ENCODE measurements at regions of chr6 and their contacts with region 1.

Region 1: DNA sequence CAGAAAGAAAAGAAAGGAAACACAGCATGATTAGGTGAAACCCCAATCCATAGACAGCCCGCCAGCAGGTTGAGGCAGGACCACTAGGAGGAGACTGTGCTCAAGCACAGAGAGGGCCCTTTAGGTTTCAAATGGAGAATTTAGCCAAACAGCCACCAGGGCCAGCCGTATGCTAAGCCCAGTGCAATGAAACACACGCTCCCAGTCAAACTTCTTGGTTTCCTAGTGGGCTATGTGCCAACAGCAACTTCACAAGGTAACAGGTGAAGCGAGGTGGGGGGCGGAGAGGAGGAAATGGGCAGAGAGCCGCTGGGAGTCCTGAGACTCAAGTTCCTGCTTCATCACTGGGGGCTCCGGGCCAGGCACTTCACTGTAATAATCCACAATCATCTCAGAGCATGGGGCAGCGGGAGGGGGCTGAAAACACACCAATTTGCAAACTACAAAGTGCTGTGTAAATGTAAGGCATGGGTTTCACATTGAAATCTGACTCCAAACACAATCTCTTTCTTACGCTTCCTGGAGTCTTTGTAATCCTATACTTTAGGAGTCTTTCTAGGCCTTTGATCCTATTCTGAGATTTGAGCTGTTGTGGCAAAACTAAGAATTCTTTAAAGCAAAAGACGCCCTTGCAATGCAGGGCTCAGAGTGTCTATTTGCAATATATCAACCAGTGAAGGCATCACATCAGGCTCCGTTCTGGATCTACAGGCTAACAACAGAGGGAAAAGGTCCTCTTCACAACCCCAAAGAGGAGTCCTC is 117.3 kb downstream of the OPRM1 start:
- DNase-seq: peak; percentile 68
- H3K4me3 ChIP-seq: no peak overlapping the region
- H3K27ac ChIP-seq: no peak overlapping the region
- H3K4me1 ChIP-seq: peaks cover 3 to 10% (median 9%) of the 10 kb centered on the region in 4 donors
- H3K27me3 ChIP-seq: no peaks in the 10 kb centered on the region
- CTCF ChIP-seq: peak in 2 of 3 experiments; percentile 24 to 46
- EP300 ChIP-seq: no peak
- POLR2A ChIP-seq: no peak

Region 2: DNA sequence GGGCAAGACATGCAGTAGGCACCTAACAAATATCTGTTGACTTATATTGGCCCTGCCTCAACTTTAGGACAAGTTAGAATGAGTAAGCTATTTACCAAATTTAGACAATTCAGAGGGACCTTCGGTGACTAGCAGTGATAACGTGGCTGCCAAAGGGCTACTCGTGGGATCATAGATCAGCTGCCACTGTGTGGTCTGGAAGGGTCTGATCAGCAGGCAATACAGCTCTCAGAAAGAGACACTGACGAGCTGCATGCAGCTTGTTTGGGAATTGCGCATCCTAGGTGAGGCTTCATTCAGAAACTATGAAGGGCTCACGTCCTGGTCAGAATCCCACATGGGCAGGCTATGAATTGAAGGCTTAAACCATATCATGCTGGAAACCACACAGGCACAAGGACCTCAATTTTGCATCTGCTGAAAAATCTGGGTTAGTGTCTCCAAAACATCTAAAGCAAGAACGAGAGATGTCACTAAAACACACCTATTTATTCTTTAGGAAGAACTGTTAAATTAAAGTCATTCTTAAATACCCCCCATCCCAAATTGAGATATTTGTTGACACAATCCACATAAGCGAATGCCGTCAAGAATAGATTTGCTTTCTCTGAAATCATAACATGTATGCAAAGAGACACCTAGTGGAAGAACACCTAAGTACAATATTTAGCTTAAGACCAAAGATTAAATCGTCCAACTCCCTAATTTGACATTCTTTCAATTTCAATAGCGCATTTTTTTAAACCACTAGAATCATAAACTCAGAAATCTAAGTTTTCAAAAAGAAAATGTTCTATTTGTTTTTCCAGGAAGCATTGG is 120.7 kb after region 1 on chr6:
- intact Hi-C with region 1: loop called (anchors 2 kb)
- DNase-seq: no peak
- H3K4me3 ChIP-seq: no peak overlapping the region
- H3K27ac ChIP-seq: no peak overlapping the region
- H3K4me1 ChIP-seq: peaks cover 5 to 15% (median 8%) of the 10 kb centered on the region in 4 donors
- H3K27me3 ChIP-seq: no peaks in the 10 kb centered on the region
- CTCF ChIP-seq: peak; percentile 58 to 61 (median 59)
- EP300 ChIP-seq: no peak
- POLR2A ChIP-seq: no peak

Region 3: GRCh38 chr6:154301839-154302752 is 145.8 kb after region 1 on chr6:
- intact Hi-C with region 1: no loop called
- DNase-seq: no peak
- H3K4me3 ChIP-seq: no peak overlapping the region
- H3K27ac ChIP-seq: no peak overlapping the region
- H3K4me1 ChIP-seq: peaks cover 9 to 14% (median 11%) of the 10 kb centered on the region in 4 donors
- H3K27me3 ChIP-seq: no peaks in the 10 kb centered on the region
- CTCF ChIP-seq: no peak
- EP300 ChIP-seq: no peak
- POLR2A ChIP-seq: no peak

Region 4: DNA sequence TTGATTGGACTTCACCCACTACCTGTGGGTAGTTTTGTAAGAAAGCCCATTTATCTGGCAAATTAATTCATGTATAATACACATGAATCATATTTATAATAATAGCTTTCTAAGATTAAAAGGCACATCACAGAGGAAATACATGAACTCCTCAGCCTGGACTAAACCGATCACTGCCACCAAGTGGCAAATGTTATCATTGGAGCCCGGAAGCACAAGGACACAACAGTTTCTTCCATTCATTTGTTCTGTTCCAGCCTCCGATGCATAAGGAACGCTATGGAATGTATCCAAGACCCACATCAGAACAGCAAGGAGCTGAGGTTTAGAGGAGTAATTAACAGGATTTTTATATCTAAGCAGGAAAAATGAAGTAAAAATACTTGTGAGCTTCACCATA is 214.2 kb after region 1 on chr6:
- intact Hi-C with region 1: loop called (anchors 10 kb)
- DNase-seq: no peak
- H3K4me3 ChIP-seq: no peak overlapping the region
- H3K27ac ChIP-seq: no peak overlapping the region
- H3K4me1 ChIP-seq: peaks cover 0 to 6% (median 3%) of the 10 kb centered on the region in 4 donors
- H3K27me3 ChIP-seq: no peaks in the 10 kb centered on the region
- CTCF ChIP-seq: peak in 2 of 3 experiments; percentile 12 to 40
- EP300 ChIP-seq: no peak
- POLR2A ChIP-seq: no peak

Region 5: GRCh38 chr6:154410619-154411072 is 254.3 kb after region 1 on chr6:
- intact Hi-C with region 1: loop called (anchors 10 kb)
- DNase-seq: no peak
- H3K4me3 ChIP-seq: peak overlapping the region in 2 of 4 donors; percentile 10 to 18
- H3K27ac ChIP-seq: peak overlapping the region; percentile 84 to 89 (median 86)
- H3K4me1 ChIP-seq: peaks cover 29 to 48% (median 46%) of the 10 kb centered on the region in 4 donors
- H3K27me3 ChIP-seq: no peaks in the 10 kb centered on the region
- CTCF ChIP-seq: no peak
- EP300 ChIP-seq: no peak
- POLR2A ChIP-seq: no peak

Region 6: GRCh38 chr6:154675602-154676088 is 519.3 kb after region 1 on chr6:
- intact Hi-C with region 1: loop called (anchors 10 kb)
- DNase-seq: peak; percentile 96
- H3K4me3 ChIP-seq: no peak overlapping the region
- H3K27ac ChIP-seq: no peak overlapping the region
- H3K4me1 ChIP-seq: no peaks in the 10 kb centered on the region
- H3K27me3 ChIP-seq: no peaks in the 10 kb centered on the region
- CTCF ChIP-seq: peak; percentile 98 to 99 (median 98)
- EP300 ChIP-seq: no peak
- POLR2A ChIP-seq: no peak